ENCODE measurements at regions of chr15 and their contacts with region 1.

Region 1: DNA sequence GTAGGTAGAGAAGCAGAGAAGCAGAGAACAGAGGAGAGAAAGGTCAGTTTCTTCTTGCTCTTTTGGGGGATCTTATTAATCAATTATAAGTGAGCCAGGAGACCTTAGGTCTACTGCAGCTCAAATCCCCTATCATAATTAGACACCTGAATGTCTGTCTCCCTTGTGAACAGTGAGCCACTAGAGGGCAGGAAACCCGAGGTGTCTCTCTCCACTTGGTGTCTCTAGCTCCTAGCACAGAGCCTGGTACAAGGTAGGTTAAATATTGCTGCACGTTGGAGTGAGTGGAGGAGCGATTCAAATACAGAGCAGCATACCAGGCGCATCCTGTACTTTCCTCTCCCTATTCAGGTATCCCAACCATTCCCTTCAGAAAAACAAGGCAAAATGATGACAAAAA is 2.0 kb upstream of the ST8SIA2 start:
- DNase-seq: no peak

Region 2: GRCh38 chr15:92142242-92143232 is 249.1 kb before region 1 on chr15:
- intact Hi-C with region 1: loop called (anchors 5 kb)
- DNase-seq: no peak

Region 3: GRCh38 chr15:92571824-92572223 is 180.2 kb after region 1 on chr15:
- intact Hi-C with region 1: no loop called
- DNase-seq: no peak

Measured in cardiac septum (tissue), 1 donor.